GM10248 (cell line): ENCODE measurements at regions of chrX and their contacts with region 1.

Region 1: DNA sequence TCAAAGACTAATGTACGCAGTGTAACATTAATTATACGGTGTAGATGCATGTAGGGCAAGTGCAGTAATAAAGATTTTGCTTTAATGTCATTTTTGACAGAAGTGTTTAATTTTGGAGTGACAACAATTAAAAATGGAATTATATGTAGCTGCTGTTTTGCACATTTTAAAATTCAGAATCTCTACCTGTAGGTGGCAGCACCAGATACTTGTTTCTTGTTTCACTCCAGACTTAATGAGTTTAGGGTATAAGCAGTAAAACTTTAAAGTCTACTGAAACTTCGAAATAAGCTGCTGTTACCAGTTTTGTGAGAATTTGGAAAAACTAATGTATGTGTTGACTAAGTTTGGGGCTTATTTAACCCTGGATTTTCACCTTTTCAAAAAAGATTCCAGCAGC is 144.9 kb downstream of the POLA1 start:
- DNase-seq: peak; percentile 6
- CTCF ChIP-seq: peak; percentile 34

Region 2: GRCh38 chrX:24828147-24828546 is 10.5 kb before region 1 on chrX:
- CTCF ChIA-PET with region 1: interaction called, 13 read pairs
- POLR2A ChIA-PET with region 1: no interaction called
- DNase-seq: no peak
- CTCF ChIP-seq: no peak

Region 3: DNA sequence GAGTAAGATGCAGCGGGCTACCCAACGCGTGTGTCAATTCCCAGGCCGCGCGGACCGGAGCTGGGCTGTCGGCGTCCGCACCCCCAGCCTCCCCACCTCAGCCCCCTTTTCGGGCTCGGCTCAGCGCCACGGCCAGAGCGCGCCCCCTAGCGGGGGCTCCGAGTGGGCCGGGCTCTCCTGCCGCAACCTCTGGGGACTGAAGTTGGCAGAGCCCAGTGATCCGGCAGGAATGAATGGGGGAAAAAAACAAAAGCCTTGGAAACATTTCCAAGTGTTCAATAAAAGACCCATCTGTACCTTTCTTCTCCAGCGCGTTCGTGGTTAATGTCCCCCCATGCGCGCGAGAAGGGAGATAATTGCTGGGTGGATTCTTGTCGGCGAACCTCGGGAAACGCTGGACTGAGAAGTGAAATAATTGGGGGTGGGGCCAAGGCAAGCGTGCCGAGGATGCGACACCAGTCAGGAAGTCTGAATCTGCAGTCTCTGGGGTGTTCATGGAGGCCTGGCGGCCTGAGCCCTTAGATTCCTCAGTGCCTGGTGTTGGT is 182.3 kb after region 1 on chrX:
- CTCF ChIA-PET with region 1: interaction called, 39 read pairs
- POLR2A ChIA-PET with region 1: no interaction called
- DNase-seq: peak; percentile 67
- CTCF ChIP-seq: peak; percentile 70